ENCODE measurements at regions of chr9 and their contacts with region 1.

Region 1: GRCh38 chr9:4382722-4383317 is 83.0 kb upstream of the GLIS3 start:
- DNase-seq: peak; percentile 14
- H3K4me3 ChIP-seq: no peak overlapping the region
- H3K27ac ChIP-seq: no peak overlapping the region
- H3K4me1 ChIP-seq: no peaks in the 10 kb centered on the region
- H3K27me3 ChIP-seq: no peaks in the 10 kb centered on the region
- CTCF ChIP-seq: peak; percentile 54 to 61

Region 2: GRCh38 chr9:4435197-4435596 is 52.4 kb after region 1 on chr9:
- CTCF ChIA-PET with region 1: no interaction called
- dilution Hi-C with region 1: no loop called
- in situ Hi-C with region 1: no loop called
- intact Hi-C with region 1: no loop called
- DNase-seq: peak; percentile 7
- H3K4me3 ChIP-seq: no peak overlapping the region
- H3K27ac ChIP-seq: no peak overlapping the region
- H3K4me1 ChIP-seq: no peaks in the 10 kb centered on the region
- H3K27me3 ChIP-seq: no peaks in the 10 kb centered on the region
- CTCF ChIP-seq: no peak

Region 3: DNA sequence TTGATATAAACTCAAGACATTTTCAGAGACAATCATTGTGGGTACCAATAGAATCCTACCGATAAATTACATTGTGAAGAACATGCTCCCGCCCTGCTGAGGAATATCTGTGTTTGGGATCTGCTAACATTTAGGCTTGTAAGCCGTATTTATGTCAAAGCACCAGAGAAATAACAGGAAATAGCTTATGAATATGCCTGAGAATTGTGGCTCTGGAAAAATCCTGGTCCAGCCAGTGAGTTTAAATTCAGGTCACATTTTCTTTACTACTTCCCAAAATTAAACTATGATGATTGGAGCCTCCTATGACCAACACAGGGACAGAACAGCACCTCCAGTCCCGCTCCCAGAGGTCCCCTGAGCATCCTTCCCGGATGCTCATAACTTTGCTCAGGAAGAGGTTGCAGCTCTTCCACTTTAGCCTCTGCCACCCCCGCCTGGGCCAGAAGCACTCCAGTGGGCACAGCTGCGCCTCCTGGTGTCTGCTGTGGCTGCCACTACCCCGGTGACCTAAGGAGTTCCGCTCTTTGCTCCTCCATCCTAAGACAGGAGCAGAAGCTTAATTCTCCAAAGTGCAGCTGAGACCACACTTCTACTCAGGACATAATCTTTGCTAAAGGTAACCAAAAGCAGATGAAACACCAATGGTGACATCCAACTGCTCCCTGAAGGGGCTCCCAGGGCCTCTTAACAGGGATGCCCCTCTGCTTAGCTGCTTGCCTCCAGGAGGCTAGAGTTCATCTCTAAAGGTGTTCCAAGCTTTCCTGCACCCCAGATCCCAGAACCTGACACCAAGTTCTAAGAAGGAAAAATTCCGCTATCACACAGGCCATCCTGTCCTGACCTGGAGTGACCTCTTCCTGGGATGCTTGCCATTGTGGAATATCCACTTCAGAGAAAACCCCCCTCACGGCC is 166.2 kb after region 1 on chr9:
- CTCF ChIA-PET with region 1: no interaction called
- dilution Hi-C with region 1: no loop called
- in situ Hi-C with region 1: no loop called
- intact Hi-C with region 1: loop called (anchors 2 kb)
- DNase-seq: no peak
- H3K4me3 ChIP-seq: no peak overlapping the region
- H3K27ac ChIP-seq: no peak overlapping the region
- H3K4me1 ChIP-seq: no peaks in the 10 kb centered on the region
- H3K27me3 ChIP-seq: no peaks in the 10 kb centered on the region
- CTCF ChIP-seq: peak in 1 of 2 donors; percentile 40

Region 4: GRCh38 chr9:4640027-4640426 is 257.2 kb after region 1 on chr9:
- CTCF ChIA-PET with region 1: interaction called, 5 read pairs
- dilution Hi-C with region 1: no loop called
- in situ Hi-C with region 1: loop called in 1 of 2 experiments (anchors 25 kb)
- intact Hi-C with region 1: loop called (anchors 1 kb)
- DNase-seq: no peak
- H3K4me3 ChIP-seq: no peak overlapping the region
- H3K27ac ChIP-seq: no peak overlapping the region
- H3K4me1 ChIP-seq: no peaks in the 10 kb centered on the region
- H3K27me3 ChIP-seq: no peaks in the 10 kb centered on the region
- CTCF ChIP-seq: peak; percentile 34 to 49

Region 5: GRCh38 chr9:4662108-4662988 is 279.5 kb after region 1 on chr9 and contains the start of gene PLPP6:
- CTCF ChIA-PET with region 1: no interaction called
- dilution Hi-C with region 1: no loop called
- in situ Hi-C with region 1: no loop called
- intact Hi-C with region 1: loop called (anchors 1 kb)
- DNase-seq: peak; percentile 95
- H3K4me3 ChIP-seq: peak within 1 kb of the TSS; percentile 76 to 92 (median 87)
- H3K27ac ChIP-seq: peak within 1 kb of the TSS; percentile 60
- H3K4me1 ChIP-seq: peaks cover 49% of the 10 kb centered on the region
- H3K27me3 ChIP-seq: no peaks in the 10 kb centered on the region
- CTCF ChIP-seq: peak in 1 of 2 donors; percentile 56
- total RNA-seq, gene PLPP6: 10.9 to 12.0 TPM

Region 6: GRCh38 chr9:4740638-4741364 is 358.0 kb after region 1 on chr9 and contains the start of gene AK3:
- CTCF ChIA-PET with region 1: no interaction called
- dilution Hi-C with region 1: no loop called
- in situ Hi-C with region 1: no loop called
- intact Hi-C with region 1: loop called (anchors 2 kb)
- DNase-seq: peak; percentile 79
- H3K4me3 ChIP-seq: peak within 1 kb of the TSS; percentile 76 to 82 (median 80)
- H3K27ac ChIP-seq: peak within 1 kb of the TSS; percentile 73
- H3K4me1 ChIP-seq: peaks cover 37% of the 10 kb centered on the region
- H3K27me3 ChIP-seq: no peaks in the 10 kb centered on the region
- CTCF ChIP-seq: peak in 1 of 2 donors; percentile 41
- total RNA-seq, gene AK3: 36.5 to 73.3 TPM

Region 7: DNA sequence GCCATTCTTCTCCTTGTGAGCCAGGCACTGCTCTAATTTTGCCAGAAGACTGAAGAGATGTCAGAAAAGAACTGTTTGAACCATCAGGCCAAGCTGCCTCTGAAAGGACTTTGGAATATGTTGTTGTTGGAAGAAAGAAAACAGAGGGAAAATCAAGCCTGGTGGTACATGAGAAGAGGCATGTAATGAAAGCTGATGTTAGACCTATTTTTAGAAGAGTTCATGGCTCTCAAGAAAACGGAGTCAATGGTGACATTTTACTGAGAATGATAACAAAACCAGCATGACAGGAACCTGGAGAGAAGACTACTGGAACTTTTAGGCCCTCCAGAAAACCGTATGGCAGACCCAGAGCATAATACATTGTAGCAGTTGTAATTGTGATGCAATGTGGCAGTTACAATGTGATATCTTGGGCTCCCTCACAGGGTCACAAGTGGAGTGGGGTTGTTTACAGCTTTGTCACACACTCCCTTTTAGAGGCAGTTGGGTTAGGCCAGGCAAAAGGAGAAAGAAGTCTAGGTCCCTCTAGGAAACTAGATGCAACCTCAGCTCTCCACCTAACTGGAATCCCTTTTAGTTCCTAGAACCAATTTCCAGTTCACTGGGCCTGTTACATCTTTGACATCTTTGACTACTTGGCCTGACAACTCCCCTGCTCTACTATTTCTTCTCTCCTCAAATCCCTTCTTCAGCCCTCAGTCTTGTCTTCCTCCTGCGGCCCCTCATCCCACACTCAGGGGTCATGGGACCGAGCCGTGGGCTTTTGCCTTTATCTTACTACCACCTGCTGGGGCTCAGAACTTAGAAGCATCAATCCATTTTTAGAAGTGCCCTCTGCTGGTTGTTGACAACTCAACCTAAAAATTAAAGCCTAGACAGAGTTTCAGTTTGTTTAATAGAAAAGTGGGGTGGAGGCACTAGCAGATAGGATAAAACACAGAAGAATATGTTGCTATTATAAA is 541.0 kb after region 1 on chr9:
- CTCF ChIA-PET with region 1: no interaction called
- dilution Hi-C with region 1: no loop called
- in situ Hi-C with region 1: no loop called
- intact Hi-C with region 1: loop called (anchors 5 kb)
- DNase-seq: peak; percentile 28
- H3K4me3 ChIP-seq: no peak overlapping the region
- H3K27ac ChIP-seq: no peak overlapping the region
- H3K4me1 ChIP-seq: no peaks in the 10 kb centered on the region
- H3K27me3 ChIP-seq: no peaks in the 10 kb centered on the region
- CTCF ChIP-seq: peak; percentile 25 to 44

Region 8: GRCh38 chr9:5608298-5609225 is 1225.7 kb after region 1 on chr9:
- CTCF ChIA-PET with region 1: no interaction called
- dilution Hi-C with region 1: no loop called
- in situ Hi-C with region 1: no loop called
- intact Hi-C with region 1: loop called (anchors 5 kb)
- DNase-seq: peak; percentile 46
- H3K4me3 ChIP-seq: peak overlapping the region; percentile 18 to 36 (median 25)
- H3K27ac ChIP-seq: no peak overlapping the region
- H3K4me1 ChIP-seq: peaks cover 3% of the 10 kb centered on the region
- H3K27me3 ChIP-seq: no peaks in the 10 kb centered on the region
- CTCF ChIP-seq: no peak